H1 (cell line): ENCODE measurements at regions of chr13 and their contacts with region 1.

Region 1: GRCh38 chr13:97109841-97110492 is 112.2 kb upstream of the MBNL2 start:
- DNase-seq: peak; percentile 36 to 92
- H3K4me3 ChIP-seq: peak overlapping the region in 1 of 4 experiments; percentile 22; a peak in 1 of 8 replicates
- H3K27ac ChIP-seq: no peak overlapping the region
- H3K4me1 ChIP-seq: no peaks in the 10 kb centered on the region; a peak in 1 of 7 replicates
- H3K27me3 ChIP-seq: no peaks in the 10 kb centered on the region
- CTCF ChIP-seq: peak; percentile 79 to 93 (median 85)
- EP300 ChIP-seq: no peak
- POLR2A ChIP-seq: no peak
- RAD21 ChIP-seq: peak; percentile 93 to 97

Region 2: DNA sequence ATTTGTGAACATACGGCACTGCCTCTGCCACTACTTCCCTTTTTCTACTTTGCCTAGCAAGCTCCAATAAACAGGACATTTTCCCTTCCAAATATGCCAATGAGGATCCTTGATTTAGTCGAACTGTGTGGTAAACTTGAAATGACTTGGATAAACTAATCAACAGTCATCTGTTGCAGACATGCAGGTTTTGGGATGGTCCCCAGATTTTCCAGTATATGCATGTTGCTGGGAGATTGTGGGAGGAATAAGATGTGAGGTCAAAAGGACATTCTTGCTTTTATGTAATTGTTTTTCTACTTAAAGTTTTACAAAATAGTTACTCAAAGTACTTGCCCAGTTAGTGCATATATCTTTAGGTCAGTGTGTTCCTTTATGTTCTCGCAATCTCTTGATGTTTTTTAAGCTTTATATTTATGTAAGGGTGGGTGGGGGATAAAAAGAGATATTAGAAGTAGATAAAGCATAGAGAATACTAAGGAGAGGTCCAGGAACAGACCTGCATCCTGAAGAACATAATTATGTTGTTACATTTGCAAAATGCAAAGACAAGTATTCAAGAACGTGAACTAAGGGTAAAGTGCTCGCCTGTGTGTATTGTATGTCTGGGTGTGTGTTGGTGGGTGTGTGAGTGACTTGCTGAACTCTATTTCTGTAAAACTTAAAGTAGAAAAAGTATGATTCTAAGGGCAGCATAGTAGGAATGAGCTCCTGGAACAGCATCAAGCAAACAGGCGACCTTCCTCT is 27.3 kb before region 1 on chr13:
- CTCF ChIA-PET with region 1: no interaction called
- POLR2A ChIA-PET with region 1: no interaction called
- DNase-seq: no peak
- H3K4me3 ChIP-seq: no peak overlapping the region
- H3K27ac ChIP-seq: no peak overlapping the region
- H3K4me1 ChIP-seq: no peaks in the 10 kb centered on the region
- H3K27me3 ChIP-seq: no peaks in the 10 kb centered on the region
- CTCF ChIP-seq: no peak
- EP300 ChIP-seq: no peak
- POLR2A ChIP-seq: no peak
- RAD21 ChIP-seq: no peak

Region 3: GRCh38 chr13:97124916-97125809 is 15.2 kb after region 1 on chr13:
- CTCF ChIA-PET with region 1: interaction called, 90 read pairs
- POLR2A ChIA-PET with region 1: no interaction called
- DNase-seq: no peak
- H3K4me3 ChIP-seq: no peak overlapping the region
- H3K27ac ChIP-seq: no peak overlapping the region
- H3K4me1 ChIP-seq: peaks cover 0 to 11% (median 3%) of the 10 kb centered on the region in 4 experiments; a peak in 3 of 7 replicates
- H3K27me3 ChIP-seq: no peaks in the 10 kb centered on the region; a peak in 1 of 7 replicates
- CTCF ChIP-seq: no peak
- EP300 ChIP-seq: no peak
- POLR2A ChIP-seq: no peak
- RAD21 ChIP-seq: no peak

Region 4: DNA sequence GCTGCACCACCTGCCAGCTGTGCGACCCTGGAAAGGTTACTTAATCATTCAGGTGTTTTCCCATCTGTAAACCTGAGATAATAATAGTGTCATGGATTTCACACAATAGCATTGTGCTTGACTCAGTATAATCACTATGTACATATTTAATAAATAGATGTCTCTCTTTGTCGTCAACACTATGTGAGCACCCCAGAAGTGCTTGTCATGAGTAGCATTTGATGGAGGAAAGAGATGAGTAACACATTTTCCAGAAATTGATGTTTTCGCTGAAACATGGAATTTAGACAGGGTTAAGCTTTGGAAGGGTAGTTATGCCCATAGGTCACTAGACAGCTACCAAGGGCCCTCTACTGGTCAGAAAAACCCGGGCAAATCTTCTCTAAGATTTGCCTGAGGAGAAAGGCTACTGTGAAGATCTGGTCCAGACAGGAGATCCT is 102.7 kb after region 1 on chr13:
- CTCF ChIA-PET with region 1: interaction called, 50 read pairs
- POLR2A ChIA-PET with region 1: no interaction called
- DNase-seq: no peak
- H3K4me3 ChIP-seq: no peak overlapping the region
- H3K27ac ChIP-seq: no peak overlapping the region
- H3K4me1 ChIP-seq: no peaks in the 10 kb centered on the region
- H3K27me3 ChIP-seq: no peaks in the 10 kb centered on the region
- CTCF ChIP-seq: peak in 2 of 3 experiments; percentile 35 to 54; a peak in 3 of 4 replicates
- EP300 ChIP-seq: no peak
- POLR2A ChIP-seq: no peak
- RAD21 ChIP-seq: peak; percentile 64 to 76

Region 5: DNA sequence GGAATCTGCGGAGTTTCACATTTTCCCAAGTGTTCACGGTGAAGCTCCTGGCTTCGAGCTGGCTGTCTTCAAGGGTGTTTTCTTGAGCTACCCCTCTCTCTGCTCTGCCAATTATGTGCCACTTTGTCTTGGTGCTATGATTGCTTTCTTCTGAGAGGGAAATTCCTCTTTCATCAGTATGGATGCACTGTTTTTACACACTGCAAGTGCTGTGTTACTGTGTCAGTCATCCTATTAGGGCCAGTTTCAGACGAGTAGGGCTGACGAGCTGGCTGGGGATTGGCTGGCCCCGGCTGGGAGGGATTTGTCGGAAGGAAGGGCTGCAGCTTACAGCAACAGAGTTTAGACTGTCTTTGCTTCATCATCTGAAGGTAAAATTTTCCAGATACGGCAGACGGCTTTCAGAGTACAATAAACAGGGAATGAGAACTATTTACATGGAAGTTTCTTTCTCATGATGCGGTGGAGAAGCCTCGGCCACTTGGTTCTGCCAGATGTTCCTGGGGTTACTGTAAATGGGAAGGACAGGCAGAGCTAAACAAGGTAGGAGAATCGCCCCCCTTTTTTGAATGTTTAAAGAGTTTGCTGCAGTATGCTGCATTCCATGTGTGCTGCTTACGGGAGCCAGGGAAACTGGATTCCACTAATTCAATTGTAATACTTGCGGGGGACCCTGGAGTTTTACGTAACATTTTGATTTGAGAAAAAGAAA is 112.2 kb after region 1 on chr13 and contains the start of gene MBNL2:
- CTCF ChIA-PET with region 1: interaction called, 19 read pairs
- POLR2A ChIA-PET with region 1: no interaction called
- DNase-seq: peak; percentile 39 to 79
- H3K4me3 ChIP-seq: peak within 1 kb of the TSS; percentile 44 to 65 (median 53); a peak in 7 of 8 replicates
- H3K27ac ChIP-seq: no peak within 1 kb of the TSS
- H3K4me1 ChIP-seq: peaks cover 1 to 16% (median 9%) of the 10 kb centered on the region in 4 experiments; a peak in 6 of 7 replicates
- H3K27me3 ChIP-seq: peaks cover 15 to 44% (median 36%) of the 10 kb centered on the region in 4 experiments
- CTCF ChIP-seq: no peak
- EP300 ChIP-seq: no peak
- POLR2A ChIP-seq: peak in 1 of 2 experiments; percentile 41; a peak in 1 of 3 replicates
- RAD21 ChIP-seq: no peak
- total RNA-seq, gene MBNL2: 2.6 and 3.2 TPM in 2 replicates

Region 6: GRCh38 chr13:97344265-97345175 is 234.6 kb after region 1 on chr13:
- CTCF ChIA-PET with region 1: interaction called, 105 read pairs
- POLR2A ChIA-PET with region 1: no interaction called
- DNase-seq: no peak
- H3K4me3 ChIP-seq: no peak overlapping the region
- H3K27ac ChIP-seq: no peak overlapping the region
- H3K4me1 ChIP-seq: peaks cover 0 to 2% (median 0%) of the 10 kb centered on the region in 4 experiments; a peak in 1 of 7 replicates
- H3K27me3 ChIP-seq: no peaks in the 10 kb centered on the region
- CTCF ChIP-seq: peak in 2 of 3 experiments; percentile 57 to 64; a peak in 3 of 4 replicates
- EP300 ChIP-seq: no peak
- POLR2A ChIP-seq: no peak
- RAD21 ChIP-seq: peak; percentile 81 to 84

Region 7: DNA sequence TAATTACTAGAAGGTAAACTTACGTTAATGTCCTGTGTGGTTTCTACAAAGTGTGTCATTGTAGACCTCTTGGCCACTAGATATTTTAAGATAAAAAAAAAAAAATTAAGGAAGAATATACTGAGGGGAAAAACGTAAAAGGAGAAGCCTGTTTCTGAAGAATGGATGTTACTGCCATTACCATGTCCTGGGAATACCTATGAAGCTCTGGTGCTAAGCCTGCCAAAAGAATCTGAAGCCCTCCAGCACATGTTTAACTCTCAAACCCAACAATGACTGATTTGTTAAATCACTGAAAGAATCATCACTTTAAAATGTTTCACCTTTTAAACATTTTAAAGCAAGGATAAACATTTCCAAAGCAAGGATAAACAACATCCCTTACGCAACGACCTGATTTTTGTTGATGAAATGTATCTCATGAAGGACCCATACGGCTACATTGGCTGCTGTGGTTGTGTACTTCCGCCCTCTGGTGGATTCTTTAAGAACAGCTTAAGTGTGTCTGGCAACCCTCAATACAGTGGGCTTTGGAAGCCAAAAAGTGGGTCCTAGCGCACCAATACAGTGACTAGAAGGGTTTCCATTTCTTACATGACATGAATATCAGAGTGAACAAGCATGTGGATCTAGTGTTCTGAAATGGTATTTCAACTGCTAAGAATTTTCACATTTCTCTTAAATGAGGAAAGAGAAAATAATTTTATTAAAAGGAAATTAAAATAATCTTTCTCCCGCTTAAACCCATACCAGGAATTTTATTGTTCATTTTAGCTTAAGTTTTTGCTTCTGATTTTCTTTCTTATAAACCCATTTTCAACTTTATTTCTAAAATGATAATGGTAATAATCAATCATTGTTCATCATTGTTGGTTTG is 249.5 kb after region 1 on chr13:
- CTCF ChIA-PET with region 1: interaction called, 72 read pairs
- POLR2A ChIA-PET with region 1: no interaction called
- DNase-seq: no peak
- H3K4me3 ChIP-seq: no peak overlapping the region
- H3K27ac ChIP-seq: no peak overlapping the region
- H3K4me1 ChIP-seq: no peaks in the 10 kb centered on the region
- H3K27me3 ChIP-seq: no peaks in the 10 kb centered on the region
- CTCF ChIP-seq: peak; percentile 18 to 86 (median 75)
- EP300 ChIP-seq: no peak
- POLR2A ChIP-seq: no peak
- RAD21 ChIP-seq: peak; percentile 93 to 94

Region 8: GRCh38 chr13:97367016-97367822 is 257.3 kb after region 1 on chr13:
- CTCF ChIA-PET with region 1: interaction called, 21 read pairs
- POLR2A ChIA-PET with region 1: no interaction called
- DNase-seq: no peak
- H3K4me3 ChIP-seq: no peak overlapping the region
- H3K27ac ChIP-seq: no peak overlapping the region
- H3K4me1 ChIP-seq: peaks cover 0 to 5% (median 1%) of the 10 kb centered on the region in 4 experiments; a peak in 2 of 7 replicates
- H3K27me3 ChIP-seq: no peaks in the 10 kb centered on the region
- CTCF ChIP-seq: no peak
- EP300 ChIP-seq: no peak
- POLR2A ChIP-seq: no peak
- RAD21 ChIP-seq: no peak